ENCODE measurements at regions of chr13 and their contacts with region 1.

Region 1: DNA sequence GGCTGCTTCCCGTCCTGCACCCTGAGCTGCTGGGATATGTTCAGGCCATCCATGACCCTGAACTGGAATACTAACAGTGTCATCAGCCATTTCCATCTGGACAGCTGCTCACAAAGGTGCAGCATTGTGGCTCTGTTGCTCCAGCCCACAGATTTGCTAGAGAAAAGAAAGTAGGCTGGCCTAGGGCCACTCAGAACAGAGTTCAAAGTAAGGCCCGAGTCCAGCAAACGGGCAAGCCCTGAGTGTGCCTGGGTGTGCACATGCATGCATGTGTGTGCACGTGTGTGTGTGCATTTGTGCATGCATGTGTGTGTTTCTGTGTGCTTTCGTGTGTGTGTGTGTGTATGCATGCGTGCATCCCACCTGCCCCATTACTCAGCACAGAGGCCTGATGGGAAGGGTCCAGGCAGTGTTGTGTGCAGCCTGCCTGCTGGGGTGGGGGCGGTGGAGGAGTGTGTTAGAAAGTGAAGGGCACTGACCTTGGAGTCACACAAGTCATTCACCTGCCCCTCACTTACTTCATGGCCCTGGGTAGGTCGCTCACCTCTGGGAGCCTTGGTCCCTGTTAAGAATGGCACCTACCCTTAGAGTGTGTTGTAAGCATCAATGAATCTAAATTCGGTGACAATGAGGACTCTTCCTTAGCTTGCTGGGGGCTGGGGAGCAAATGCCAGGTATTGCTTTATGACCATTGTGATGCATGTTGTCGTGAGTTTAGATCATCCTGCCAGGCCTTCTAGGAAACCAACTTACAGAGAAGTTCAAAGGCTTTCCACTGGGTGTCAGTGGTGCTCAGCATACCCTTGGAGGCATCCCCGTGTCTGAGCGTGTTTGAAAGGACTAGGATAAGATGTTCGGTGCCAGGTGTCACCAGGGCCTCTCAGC is 53.2 kb downstream of the GPR12 start:
- DNase-seq: no peak
- H3K4me3 ChIP-seq: no peak overlapping the region
- H3K27ac ChIP-seq: no peak overlapping the region
- H3K4me1 ChIP-seq: no peaks in the 10 kb centered on the region
- H3K27me3 ChIP-seq: peaks cover 0 to 22% (median 0%) of the 10 kb centered on the region in 7 donors
- CTCF ChIP-seq: peak in 9 of 11 experiments; percentile 20 to 66 (median 51)
- POLR2A ChIP-seq: no peak

Region 2: DNA sequence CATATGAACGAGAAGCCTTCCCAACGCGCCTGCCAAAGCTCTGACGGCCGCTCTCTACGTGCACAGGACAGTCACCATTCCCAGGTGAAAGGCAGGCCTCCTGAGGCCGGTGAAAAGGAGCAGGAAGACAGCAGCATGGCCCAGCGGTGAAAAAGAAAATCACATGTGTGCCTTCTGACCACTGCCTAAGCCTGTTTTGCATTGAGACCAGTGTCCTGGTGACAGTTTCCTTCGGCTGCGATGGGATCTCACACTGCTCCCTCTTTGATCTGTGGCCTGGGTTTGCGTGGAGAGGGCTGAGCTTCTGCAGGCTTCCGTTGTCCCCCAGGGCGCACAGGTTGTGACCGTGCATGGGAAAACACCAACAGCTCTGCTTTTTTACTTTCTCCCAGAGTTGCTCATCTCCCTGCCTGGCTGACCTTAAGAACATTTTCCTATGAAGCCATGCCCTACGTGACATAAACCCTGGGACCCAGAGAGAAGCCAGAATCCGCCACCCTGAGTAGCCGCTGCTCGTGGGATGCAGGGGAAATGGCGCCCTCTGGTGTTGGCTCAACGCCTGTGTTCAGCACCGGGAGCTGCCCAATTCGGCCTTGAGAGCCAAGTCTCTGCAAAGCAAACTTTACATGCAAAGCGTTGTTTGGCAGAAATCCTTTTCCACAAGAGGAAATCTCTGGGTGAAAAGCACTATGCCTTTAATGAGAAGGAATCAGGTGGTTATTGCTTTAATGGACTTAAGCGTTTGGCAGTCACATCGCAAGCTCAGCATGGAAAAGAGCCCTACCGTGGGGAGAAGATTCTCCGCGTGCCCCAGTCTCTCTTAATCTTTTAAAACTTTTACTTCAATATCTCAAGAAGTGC is 165.4 kb after region 1 on chr13:
- intact Hi-C with region 1: loop called (anchors 5 kb)
- DNase-seq: peak; percentile 78
- H3K4me3 ChIP-seq: no peak overlapping the region
- H3K27ac ChIP-seq: no peak overlapping the region
- H3K4me1 ChIP-seq: no peaks in the 10 kb centered on the region
- H3K27me3 ChIP-seq: peaks cover 0 to 36% (median 5%) of the 10 kb centered on the region in 7 donors
- CTCF ChIP-seq: peak; percentile 8 to 73 (median 54)
- POLR2A ChIP-seq: no peak

Region 3: DNA sequence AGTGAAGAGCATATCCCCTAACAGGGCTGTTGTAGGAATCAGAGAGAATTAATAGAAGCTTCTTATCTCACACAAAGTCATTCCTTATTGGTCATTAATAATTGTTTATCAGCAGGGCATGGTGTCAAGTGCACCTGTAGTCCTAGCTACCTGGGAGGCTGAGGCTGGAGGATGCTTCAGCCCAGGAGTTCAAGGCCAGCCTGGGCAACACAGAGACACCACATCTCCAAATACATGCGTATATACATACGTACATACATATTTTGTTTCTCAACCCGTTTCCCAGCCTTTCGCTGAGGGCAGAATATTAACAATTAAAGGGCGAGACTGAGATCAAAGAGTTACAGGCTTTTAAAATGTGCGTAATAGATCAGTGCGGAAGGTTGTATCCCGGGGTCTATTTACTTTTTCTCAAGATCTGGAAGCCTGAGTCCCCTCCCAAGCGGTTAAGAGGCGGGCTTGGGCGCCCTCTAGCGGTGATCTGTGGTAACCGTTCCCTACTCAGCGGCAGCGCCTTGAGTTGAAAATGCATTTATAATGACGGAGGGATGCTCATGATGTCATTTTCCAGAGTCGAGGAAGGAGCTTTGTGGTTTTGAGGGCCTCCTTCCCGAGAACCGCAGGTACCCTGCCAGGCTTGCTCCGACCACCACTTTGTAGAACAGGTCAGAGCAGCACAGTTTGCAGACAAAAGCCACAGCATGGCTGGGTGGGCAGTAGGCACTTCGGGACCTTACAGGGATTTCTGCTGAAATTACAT is 222.8 kb after region 1 on chr13:
- intact Hi-C with region 1: loop called (anchors 5 kb)
- DNase-seq: peak; percentile 90
- H3K4me3 ChIP-seq: no peak overlapping the region
- H3K27ac ChIP-seq: no peak overlapping the region
- H3K4me1 ChIP-seq: peaks cover 0 to 7% (median 6%) of the 10 kb centered on the region in 6 donors
- H3K27me3 ChIP-seq: peaks cover 0 to 25% (median 0%) of the 10 kb centered on the region in 7 donors
- CTCF ChIP-seq: peak; percentile 57 to 94 (median 92)
- POLR2A ChIP-seq: no peak